ENCODE measurements at regions of chr20 and their contacts with region 1.

Region 1: GRCh38 chr20:46013826-46014516 is 5.3 kb downstream of the MMP9 start:
- DNase-seq: peak; percentile 90
- H3K4me3 Mint-ChIP-seq: peak overlapping the region; percentile 69
- H3K27ac Mint-ChIP-seq: peak overlapping the region; percentile 59
- H3K4me1 Mint-ChIP-seq: peaks cover 44% of the 10 kb centered on the region
- H3K27me3 Mint-ChIP-seq: peaks cover 58% of the 10 kb centered on the region

Region 2: GRCh38 chr20:45934586-45935415 is 79.2 kb before region 1 on chr20 and contains the start of gene PCIF1:
- intact Hi-C with region 1: no loop called
- DNase-seq: peak; percentile 99
- H3K4me3 Mint-ChIP-seq: peak within 1 kb of the TSS; percentile 99
- H3K27ac Mint-ChIP-seq: peak within 1 kb of the TSS; percentile 99
- H3K4me1 Mint-ChIP-seq: peaks cover 21% of the 10 kb centered on the region
- H3K27me3 Mint-ChIP-seq: no peaks in the 10 kb centered on the region
- total RNA-seq, gene PCIF1: 26.1 and 27.8 TPM in 2 replicates

Region 3: GRCh38 chr20:45964006-45964400 is 50.0 kb before region 1 on chr20:
- intact Hi-C with region 1: no loop called
- DNase-seq: no peak
- H3K4me3 Mint-ChIP-seq: no peak overlapping the region
- H3K27ac Mint-ChIP-seq: no peak overlapping the region
- H3K4me1 Mint-ChIP-seq: peaks cover 3% of the 10 kb centered on the region
- H3K27me3 Mint-ChIP-seq: no peaks in the 10 kb centered on the region

Region 4: GRCh38 chr20:45987108-45987780 is 26.7 kb before region 1 on chr20:
- intact Hi-C with region 1: loop called (anchors 1 kb)
- DNase-seq: peak; percentile 94
- H3K4me3 Mint-ChIP-seq: no peak overlapping the region
- H3K27ac Mint-ChIP-seq: no peak overlapping the region
- H3K4me1 Mint-ChIP-seq: peaks cover 6% of the 10 kb centered on the region
- H3K27me3 Mint-ChIP-seq: peaks cover 20% of the 10 kb centered on the region

Region 5: GRCh38 chr20:46028772-46029371 is 14.9 kb after region 1 on chr20 and contains the start of gene SLC12A5:
- intact Hi-C with region 1: loop called (anchors 2 kb)
- DNase-seq: no peak
- H3K4me3 Mint-ChIP-seq: no peak within 1 kb of the TSS
- H3K27ac Mint-ChIP-seq: peak within 1 kb of the TSS; percentile 48
- H3K4me1 Mint-ChIP-seq: no peaks in the 10 kb centered on the region
- H3K27me3 Mint-ChIP-seq: peaks cover 62% of the 10 kb centered on the region
- total RNA-seq, gene SLC12A5: not detected in 2 replicates

Region 6: GRCh38 chr20:46174469-46175128 is 160.6 kb after region 1 on chr20:
- intact Hi-C with region 1: loop called (anchors 1 kb)
- DNase-seq: peak; percentile 90
- H3K4me3 Mint-ChIP-seq: no peak overlapping the region
- H3K27ac Mint-ChIP-seq: no peak overlapping the region
- H3K4me1 Mint-ChIP-seq: no peaks in the 10 kb centered on the region
- H3K27me3 Mint-ChIP-seq: peaks cover 41% of the 10 kb centered on the region